ENCODE measurements at regions of chr4 and their contacts with region 1.

Region 1: DNA sequence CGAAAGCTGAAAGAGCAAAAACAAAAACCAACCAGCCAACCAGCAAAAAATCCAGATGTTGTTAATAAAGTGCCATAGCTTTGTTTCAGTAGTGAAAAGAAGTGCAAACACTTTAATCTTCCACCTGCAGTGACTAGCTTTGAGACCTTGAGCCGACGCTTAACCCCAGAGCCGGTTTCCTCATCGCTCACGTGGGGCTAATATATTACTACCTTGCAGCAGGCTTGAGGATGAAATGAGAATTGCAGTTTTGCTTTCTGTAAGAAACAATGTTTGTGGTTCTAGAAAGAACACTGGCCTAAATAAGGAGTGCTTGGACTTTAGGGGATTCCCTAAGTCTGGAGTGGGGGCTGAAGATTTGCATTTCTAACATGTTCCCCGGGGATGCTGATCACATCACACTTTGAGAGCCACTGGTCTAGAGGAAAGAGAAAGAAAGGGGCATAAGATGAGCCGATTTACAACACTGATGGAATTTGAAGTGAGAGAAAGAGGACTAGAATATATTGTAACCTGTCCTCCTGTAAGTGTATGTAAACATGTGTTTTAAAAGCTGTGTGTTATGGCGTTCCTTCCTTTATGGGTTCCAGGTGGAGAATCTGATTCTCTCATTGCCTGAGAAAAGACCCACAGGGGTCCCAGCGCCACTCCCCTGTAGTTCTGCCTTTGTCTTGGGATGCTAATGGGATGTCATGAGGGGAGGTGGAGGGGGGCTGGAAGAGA is 1.4 kb downstream of the FGF2 start:
- DNase-seq: peak; percentile 75
- H3K4me3 Mint-ChIP-seq: peak overlapping the region; percentile 77
- H3K27ac Mint-ChIP-seq: peak overlapping the region; percentile 91
- H3K4me1 Mint-ChIP-seq: peaks cover 26% of the 10 kb centered on the region
- H3K27me3 Mint-ChIP-seq: no peaks in the 10 kb centered on the region
- CTCF ChIP-seq: no peak

Region 2: GRCh38 chr4:122764821-122765215 is 63.2 kb before region 1 on chr4:
- CTCF ChIA-PET with region 1: interaction called, 3 read pairs
- POLR2A ChIA-PET with region 1: interaction called, 23 read pairs
- intact Hi-C with region 1: no loop called
- DNase-seq: peak; percentile 76
- H3K4me3 Mint-ChIP-seq: peak overlapping the region; percentile 51
- H3K27ac Mint-ChIP-seq: peak overlapping the region; percentile 92
- H3K4me1 Mint-ChIP-seq: peaks cover 17% of the 10 kb centered on the region
- H3K27me3 Mint-ChIP-seq: no peaks in the 10 kb centered on the region
- CTCF ChIP-seq: no peak

Region 3: DNA sequence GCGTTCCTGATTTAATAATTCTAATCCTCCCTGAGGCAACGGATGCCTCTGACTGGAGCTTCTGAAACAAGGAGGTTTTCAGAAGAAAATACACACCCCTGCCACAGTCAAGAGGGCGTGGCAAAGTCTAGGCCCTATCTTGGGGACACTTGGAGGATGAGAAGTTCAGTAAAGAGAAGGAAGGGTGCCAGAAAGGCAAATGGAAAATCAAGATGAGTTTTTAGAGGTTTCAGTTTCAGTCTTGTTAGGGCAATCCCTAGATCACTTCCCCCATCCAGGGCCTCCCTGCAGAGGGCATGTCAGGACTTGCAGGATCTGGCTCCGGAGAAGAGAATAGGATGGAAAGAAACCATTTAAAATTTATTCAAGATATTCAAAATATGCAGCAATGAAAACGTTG is 29.9 kb before region 1 on chr4:
- CTCF ChIA-PET with region 1: interaction called, 7 read pairs
- POLR2A ChIA-PET with region 1: interaction called, 25 read pairs
- intact Hi-C with region 1: loop called (anchors 2 kb)
- DNase-seq: peak; percentile 90
- H3K4me3 Mint-ChIP-seq: peak overlapping the region; percentile 66
- H3K27ac Mint-ChIP-seq: peak overlapping the region; percentile 98
- H3K4me1 Mint-ChIP-seq: peaks cover 20% of the 10 kb centered on the region
- H3K27me3 Mint-ChIP-seq: no peaks in the 10 kb centered on the region
- CTCF ChIP-seq: no peak

Region 4: GRCh38 chr4:122873821-122874593 is 46.0 kb after region 1 on chr4:
- CTCF ChIA-PET with region 1: interaction called, 6 read pairs
- POLR2A ChIA-PET with region 1: interaction called, 5 read pairs
- intact Hi-C with region 1: loop called (anchors 2 kb)
- DNase-seq: peak; percentile 73
- H3K4me3 Mint-ChIP-seq: no peak overlapping the region
- H3K27ac Mint-ChIP-seq: peak overlapping the region; percentile 82
- H3K4me1 Mint-ChIP-seq: peaks cover 47% of the 10 kb centered on the region
- H3K27me3 Mint-ChIP-seq: no peaks in the 10 kb centered on the region
- CTCF ChIP-seq: no peak

Region 5: GRCh38 chr4:122922877-122923511 is 95.0 kb after region 1 on chr4:
- CTCF ChIA-PET with region 1: interaction called, 7 read pairs
- POLR2A ChIA-PET with region 1: interaction called, 12 read pairs
- intact Hi-C with region 1: no loop called
- DNase-seq: peak; percentile 86
- H3K4me3 Mint-ChIP-seq: no peak overlapping the region
- H3K27ac Mint-ChIP-seq: peak overlapping the region; percentile 74
- H3K4me1 Mint-ChIP-seq: peaks cover 5% of the 10 kb centered on the region
- H3K27me3 Mint-ChIP-seq: no peaks in the 10 kb centered on the region
- CTCF ChIP-seq: no peak

Measured in MCF 10A (cell line).